WTC11 (cell line): ENCODE measurements at regions of chr7 and their contacts with region 1.

Region 1: DNA sequence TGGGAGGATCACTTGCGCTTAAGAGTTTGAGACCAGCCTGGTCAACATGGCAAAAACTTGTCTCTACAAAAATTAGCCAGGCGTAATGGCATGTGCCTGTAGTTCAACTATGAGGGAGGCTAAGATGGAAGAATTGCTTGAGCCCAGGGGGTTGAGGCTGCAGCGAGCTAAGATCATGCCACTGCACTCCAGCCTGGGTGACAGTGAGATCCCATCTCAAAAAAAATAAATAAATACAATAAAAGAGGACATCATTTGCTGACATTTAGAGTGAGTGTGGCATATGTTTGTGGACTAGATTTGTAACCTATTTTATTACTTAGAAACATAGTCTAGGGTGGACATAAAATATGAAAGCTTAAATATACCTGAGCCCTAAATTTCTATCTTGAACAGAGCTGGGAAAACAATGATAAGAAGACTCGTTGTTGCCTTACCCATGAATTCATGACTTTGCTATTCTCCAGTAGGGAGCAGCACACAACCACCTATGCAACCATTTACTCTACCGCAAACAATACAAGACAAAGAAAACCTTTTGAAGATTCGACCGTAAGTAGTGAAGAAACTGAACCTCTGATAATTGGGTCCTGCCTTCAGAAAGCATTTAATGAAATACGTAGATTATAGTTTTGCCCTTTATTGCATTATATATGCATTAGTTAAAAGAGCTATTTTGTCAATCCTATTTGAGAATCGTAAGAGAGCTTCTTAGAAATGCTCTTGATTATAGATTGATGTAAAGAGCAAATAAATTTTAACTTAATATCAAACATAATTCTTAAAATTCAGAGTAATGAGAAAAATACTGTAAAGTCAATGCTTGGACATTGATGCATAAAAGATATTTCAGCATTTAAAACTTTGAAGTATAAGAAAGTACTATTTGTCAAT is 83.5 kb downstream of the GNAT3 start:
- DNase-seq: peak; percentile 12
- ATAC-seq: peak; percentile 94
- H3K4me3 Mint-ChIP-seq: no peak overlapping the region
- H3K27ac Mint-ChIP-seq: no peak overlapping the region
- H3K4me1 Mint-ChIP-seq: peaks cover 15% of the 10 kb centered on the region
- H3K27me3 Mint-ChIP-seq: no peaks in the 10 kb centered on the region
- CTCF ChIP-seq: no peak

Region 2: DNA sequence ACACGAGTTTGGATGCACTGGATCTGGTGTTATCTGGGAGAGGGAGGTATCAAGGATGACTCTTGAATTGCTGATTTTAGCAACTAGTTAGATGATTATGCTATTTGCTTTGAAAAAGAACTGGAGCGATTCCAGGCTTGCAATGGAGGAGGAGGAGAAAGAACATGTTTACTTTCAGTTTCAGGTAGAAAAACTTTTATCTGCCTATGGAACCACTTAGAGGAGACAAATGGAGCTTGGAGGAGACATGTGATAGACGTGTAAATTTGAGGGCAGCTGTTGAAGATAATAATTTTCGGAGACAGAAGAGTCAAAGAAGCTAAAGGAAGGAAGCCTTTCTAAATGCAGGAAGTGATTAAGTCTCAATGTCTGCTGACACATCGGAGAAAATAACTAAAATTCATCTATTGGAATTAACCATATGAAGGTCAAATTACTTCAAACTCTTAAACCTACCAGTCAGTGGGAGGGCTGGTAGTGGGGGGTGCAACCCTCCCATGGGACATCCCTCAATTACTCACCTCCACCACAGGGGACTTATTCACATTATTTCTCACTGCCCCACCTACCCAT is 350.2 kb before region 1 on chr7:
- CTCF ChIA-PET with region 1: no interaction called
- POLR2A ChIA-PET with region 1: no interaction called
- DNase-seq: no peak
- ATAC-seq: no peak
- H3K4me3 Mint-ChIP-seq: no peak overlapping the region
- H3K27ac Mint-ChIP-seq: no peak overlapping the region
- H3K4me1 Mint-ChIP-seq: peaks cover 9% of the 10 kb centered on the region
- H3K27me3 Mint-ChIP-seq: no peaks in the 10 kb centered on the region
- CTCF ChIP-seq: no peak

Region 3: DNA sequence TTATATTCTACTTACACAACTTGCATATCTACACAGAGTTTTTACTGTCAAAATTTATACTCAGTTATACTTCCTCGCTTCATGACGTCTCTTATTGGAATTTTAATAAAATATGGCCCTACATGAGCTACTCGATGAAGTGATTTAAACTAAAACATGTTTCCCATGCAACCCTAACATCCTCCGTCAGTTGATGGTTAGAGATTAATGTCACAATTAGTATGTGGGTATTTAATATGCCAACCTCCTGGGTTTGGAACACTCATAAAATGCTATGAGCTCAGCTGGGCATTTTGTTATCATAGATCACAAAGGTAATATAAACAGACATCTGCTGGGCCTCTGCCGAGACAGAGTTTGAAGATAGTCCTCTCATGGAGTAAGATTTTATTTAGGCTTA is 16.9 kb after region 1 on chr7:
- CTCF ChIA-PET with region 1: no interaction called
- POLR2A ChIA-PET with region 1: no interaction called
- DNase-seq: no peak
- ATAC-seq: no peak
- H3K4me3 Mint-ChIP-seq: no peak overlapping the region
- H3K27ac Mint-ChIP-seq: no peak overlapping the region
- H3K4me1 Mint-ChIP-seq: peaks cover 4% of the 10 kb centered on the region; the same call in 1 of the 2 replicates
- H3K27me3 Mint-ChIP-seq: no peaks in the 10 kb centered on the region
- CTCF ChIP-seq: no peak

Region 4: GRCh38 chr7:80463272-80463920 is 35.0 kb after region 1 on chr7:
- CTCF ChIA-PET with region 1: no interaction called
- POLR2A ChIA-PET with region 1: no interaction called
- DNase-seq: no peak
- ATAC-seq: no peak
- H3K4me3 Mint-ChIP-seq: no peak overlapping the region
- H3K27ac Mint-ChIP-seq: no peak overlapping the region
- H3K4me1 Mint-ChIP-seq: no peaks in the 10 kb centered on the region
- H3K27me3 Mint-ChIP-seq: no peaks in the 10 kb centered on the region
- CTCF ChIP-seq: no peak

Region 5: DNA sequence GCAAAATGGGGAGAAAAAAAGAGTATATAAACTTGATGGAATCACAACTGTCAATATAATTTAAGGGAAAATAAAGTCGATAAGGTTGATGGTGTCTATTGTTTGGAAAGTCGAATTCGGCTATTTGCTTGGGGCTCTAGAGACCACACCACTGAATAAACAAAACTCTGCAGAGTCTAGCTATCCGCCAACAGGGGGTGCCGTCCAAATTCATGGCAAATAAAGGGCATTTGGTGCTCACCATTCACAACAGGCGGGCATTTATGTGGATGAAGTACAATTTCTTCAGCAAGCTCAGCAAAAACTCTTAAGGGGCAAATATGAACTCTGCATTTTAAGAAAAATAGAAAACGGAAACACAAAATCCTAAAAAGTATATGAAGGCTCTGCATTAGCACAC is 233.3 kb after region 1 on chr7:
- CTCF ChIA-PET with region 1: interaction called, 15 read pairs
- POLR2A ChIA-PET with region 1: no interaction called
- DNase-seq: peak; percentile 23
- ATAC-seq: peak; percentile 71
- H3K4me3 Mint-ChIP-seq: no peak overlapping the region
- H3K27ac Mint-ChIP-seq: no peak overlapping the region
- H3K4me1 Mint-ChIP-seq: no peaks in the 10 kb centered on the region
- H3K27me3 Mint-ChIP-seq: no peaks in the 10 kb centered on the region
- CTCF ChIP-seq: peak; percentile 27; the same call in 1 of the 2 replicates